MCF 10A (cell line): ENCODE measurements at regions of chr3 and their contacts with region 1.

Region 1: GRCh38 chr3:129893581-129894070 is at the start of gene TMCC1:
- DNase-seq: peak; percentile 92
- H3K4me3 Mint-ChIP-seq: peak within 1 kb of the TSS; percentile 92
- H3K27ac Mint-ChIP-seq: peak within 1 kb of the TSS; percentile 81
- H3K4me1 Mint-ChIP-seq: peaks cover 34% of the 10 kb centered on the region
- H3K27me3 Mint-ChIP-seq: no peaks in the 10 kb centered on the region
- CTCF ChIP-seq: no peak
- total RNA-seq, gene TMCC1: 22.5 and 31.2 TPM in 2 replicates

Region 2: DNA sequence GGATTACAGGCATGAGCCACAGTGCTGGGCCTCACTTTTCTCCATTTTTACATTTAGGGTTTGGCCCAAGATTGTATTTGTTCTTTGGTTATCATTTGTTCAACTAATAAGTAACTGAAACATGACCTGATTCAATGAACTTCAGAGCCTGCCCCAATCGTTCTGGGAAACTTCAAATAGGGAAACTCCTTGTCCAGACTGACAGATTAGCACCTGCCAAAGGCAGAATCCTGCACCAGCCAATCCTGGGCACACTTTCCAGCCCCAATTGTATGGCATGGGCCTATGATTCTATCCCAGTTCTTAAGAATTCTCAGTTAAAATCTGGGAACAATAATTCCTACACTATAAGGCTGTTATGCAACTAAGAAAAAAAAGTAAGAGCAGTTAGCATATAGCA is 753.7 kb before region 1 on chr3:
- CTCF ChIA-PET with region 1: no interaction called
- POLR2A ChIA-PET with region 1: no interaction called
- intact Hi-C with region 1: no loop called
- DNase-seq: no peak
- H3K4me3 Mint-ChIP-seq: no peak overlapping the region
- H3K27ac Mint-ChIP-seq: no peak overlapping the region
- H3K4me1 Mint-ChIP-seq: no peaks in the 10 kb centered on the region
- H3K27me3 Mint-ChIP-seq: no peaks in the 10 kb centered on the region
- CTCF ChIP-seq: no peak

Region 3: DNA sequence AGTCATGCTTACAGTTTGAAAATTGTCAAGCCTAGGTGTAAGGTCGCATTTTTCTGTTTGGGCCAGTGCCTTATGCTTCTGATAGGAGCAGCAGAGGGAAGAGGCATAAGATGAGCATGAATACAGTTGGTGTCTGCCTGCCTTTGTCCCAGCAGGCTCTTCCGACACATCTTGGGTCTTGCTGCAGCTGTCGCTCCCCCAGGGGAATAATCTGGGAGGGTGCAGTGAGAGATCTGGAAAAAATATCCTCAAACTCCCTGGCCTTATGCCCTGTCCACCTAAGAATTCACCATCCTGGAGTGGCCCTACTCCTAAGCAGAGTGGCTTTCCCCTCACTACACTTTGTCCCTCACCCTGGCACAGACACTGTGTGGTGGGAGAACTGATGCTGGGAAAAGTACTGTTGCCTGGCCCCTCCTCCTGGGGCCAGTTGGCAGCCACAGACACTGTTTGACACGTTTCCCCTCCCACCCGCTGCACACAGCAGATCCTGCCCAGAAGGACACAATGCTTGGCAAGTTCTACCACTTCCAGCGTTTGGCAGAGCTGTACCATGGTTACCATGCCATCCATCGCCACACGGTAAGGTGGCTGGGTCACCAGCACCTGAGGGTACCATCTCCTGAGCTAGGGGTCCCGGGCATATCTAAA is 386.3 kb before region 1 on chr3:
- CTCF ChIA-PET with region 1: no interaction called
- POLR2A ChIA-PET with region 1: no interaction called
- intact Hi-C with region 1: no loop called
- DNase-seq: no peak
- H3K4me3 Mint-ChIP-seq: no peak overlapping the region
- H3K27ac Mint-ChIP-seq: no peak overlapping the region
- H3K4me1 Mint-ChIP-seq: no peaks in the 10 kb centered on the region
- H3K27me3 Mint-ChIP-seq: no peaks in the 10 kb centered on the region
- CTCF ChIP-seq: no peak

Region 4: DNA sequence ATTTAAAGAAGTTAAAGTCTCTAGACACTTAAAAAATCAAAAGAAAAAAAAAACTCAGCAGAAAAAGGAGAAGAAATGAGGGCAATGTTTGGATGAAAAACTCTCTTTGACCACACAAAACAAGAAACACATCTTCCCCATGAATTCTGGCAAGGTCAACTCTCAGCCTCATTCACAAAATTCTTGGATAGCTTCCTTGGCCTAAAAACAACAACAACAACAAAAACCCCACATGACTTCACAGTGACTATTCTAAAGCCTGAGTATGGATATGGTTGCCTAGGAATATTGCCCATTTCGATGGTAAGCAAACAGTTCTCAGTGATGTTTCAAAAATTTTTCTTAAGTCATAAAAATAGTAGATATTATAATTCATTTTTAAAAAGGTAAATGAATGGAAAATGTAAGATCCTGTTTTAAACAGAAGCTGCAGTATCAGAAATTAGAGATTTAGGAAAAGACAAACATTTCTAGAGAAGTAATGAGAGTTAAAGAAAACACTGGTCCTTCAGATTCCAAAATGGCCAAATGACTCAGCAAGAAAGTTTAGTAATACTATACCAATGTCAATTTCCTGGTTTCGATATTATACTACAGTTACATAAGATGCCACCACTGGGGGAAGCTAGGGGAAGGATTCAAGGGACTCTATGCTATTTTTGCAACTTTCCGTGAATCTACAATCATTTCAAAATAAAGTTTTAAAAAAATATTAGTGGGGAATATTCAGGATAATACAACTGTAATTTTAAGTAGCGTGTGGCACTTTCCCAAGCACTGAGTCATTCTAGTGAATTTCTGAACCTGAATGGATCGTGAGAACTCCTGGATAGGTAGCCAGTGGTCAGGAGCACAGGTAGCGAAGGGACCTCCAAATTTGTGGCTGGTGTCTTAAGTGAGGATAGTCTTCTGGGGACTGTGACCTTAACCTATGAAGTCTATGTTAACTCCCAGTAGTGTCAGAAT is 37.9 kb before region 1 on chr3:
- CTCF ChIA-PET with region 1: interaction called, 4 read pairs
- POLR2A ChIA-PET with region 1: interaction called, 12 read pairs
- intact Hi-C with region 1: no loop called
- DNase-seq: peak; percentile 69
- H3K4me3 Mint-ChIP-seq: peak overlapping the region; percentile 25
- H3K27ac Mint-ChIP-seq: peak overlapping the region; percentile 75
- H3K4me1 Mint-ChIP-seq: no peaks in the 10 kb centered on the region
- H3K27me3 Mint-ChIP-seq: no peaks in the 10 kb centered on the region
- CTCF ChIP-seq: no peak

Region 5: GRCh38 chr3:129911261-129911861 is 17.7 kb after region 1 on chr3:
- CTCF ChIA-PET with region 1: no interaction called
- POLR2A ChIA-PET with region 1: interaction called, 10 read pairs
- intact Hi-C with region 1: loop called (anchors 1 kb)
- DNase-seq: no peak
- H3K4me3 Mint-ChIP-seq: no peak overlapping the region
- H3K27ac Mint-ChIP-seq: no peak overlapping the region
- H3K4me1 Mint-ChIP-seq: no peaks in the 10 kb centered on the region
- H3K27me3 Mint-ChIP-seq: no peaks in the 10 kb centered on the region
- CTCF ChIP-seq: no peak